ENCODE measurements at regions of chr15 and their contacts with region 1.

Region 1: DNA sequence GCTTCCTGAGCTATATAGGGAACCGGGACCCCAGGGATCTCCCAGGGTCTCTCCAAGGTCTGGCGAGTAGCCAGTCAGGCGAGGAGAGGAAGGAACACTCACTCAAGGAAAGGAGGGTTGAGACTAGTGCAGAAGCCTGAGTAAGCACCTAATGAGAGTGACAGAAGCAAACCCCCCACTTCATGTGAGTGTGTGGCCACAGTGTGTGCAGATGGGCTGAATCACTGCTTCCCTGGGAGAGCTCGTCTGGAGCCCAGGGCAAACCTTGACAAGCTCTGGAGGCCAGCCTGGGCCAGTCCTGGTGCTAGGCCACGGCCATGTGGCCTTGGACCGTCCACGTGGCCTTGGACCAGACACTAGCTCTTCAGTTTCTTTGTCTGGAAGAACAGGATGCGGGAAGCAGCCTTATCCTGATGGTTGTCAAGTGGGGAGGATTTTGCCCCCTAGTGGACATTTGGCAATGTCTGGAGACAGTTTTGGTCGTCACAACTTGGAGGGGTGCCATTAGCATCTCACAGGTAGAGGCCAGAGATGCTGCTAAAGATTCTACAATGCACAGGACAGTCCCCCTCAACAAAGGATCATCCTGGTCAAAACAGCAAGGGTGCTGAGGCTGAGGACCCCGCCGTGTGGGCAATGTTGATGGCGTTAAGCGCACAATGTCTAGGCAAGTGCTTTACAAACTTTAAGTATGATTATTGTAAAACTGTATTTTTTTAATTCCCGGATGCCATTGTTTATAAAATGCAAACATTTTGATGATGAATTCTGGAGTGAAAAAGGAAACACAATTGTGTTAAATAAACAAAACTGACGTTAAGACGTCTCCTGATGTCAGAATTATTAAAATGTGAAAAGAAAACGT is 34.8 kb upstream of the CTSH start:
- DNase-seq: no peak
- H3K4me3 ChIP-seq: no peak overlapping the region
- H3K27ac ChIP-seq: no peak overlapping the region
- H3K4me1 ChIP-seq: peaks cover 5 to 18% (median 10%) of the 10 kb centered on the region in 4 donors
- H3K27me3 ChIP-seq: no peaks in the 10 kb centered on the region
- CTCF ChIP-seq: peak; percentile 52 to 64 (median 61)
- EP300 ChIP-seq: no peak
- POLR2A ChIP-seq: no peak

Region 2: DNA sequence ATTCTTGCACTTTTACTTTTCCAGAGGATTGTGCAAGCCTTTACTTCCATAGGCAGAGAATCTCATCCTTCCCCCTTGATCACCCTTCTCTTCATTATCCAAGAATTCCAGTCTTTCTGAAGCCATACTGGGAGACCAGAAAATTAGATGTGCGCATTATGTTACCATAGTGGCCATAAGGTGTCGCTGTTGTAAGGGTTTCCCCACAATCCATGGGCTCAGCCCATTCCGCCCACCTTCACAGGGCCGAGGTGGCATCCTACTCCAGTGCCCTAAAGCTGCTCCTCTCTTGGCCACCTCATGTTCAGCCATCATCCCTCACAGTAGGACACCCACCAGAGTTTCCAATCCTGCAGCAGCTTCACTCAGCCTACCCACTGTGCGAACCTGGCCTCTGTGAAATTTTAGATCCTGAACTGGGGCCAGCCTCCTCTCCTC is 69.9 kb before region 1 on chr15:
- intact Hi-C with region 1: loop called (anchors 5 kb)
- DNase-seq: no peak
- H3K4me3 ChIP-seq: no peak overlapping the region
- H3K27ac ChIP-seq: no peak overlapping the region
- H3K4me1 ChIP-seq: peaks cover 32 to 43% (median 41%) of the 10 kb centered on the region in 4 donors
- H3K27me3 ChIP-seq: no peaks in the 10 kb centered on the region
- CTCF ChIP-seq: peak; percentile 48 to 67 (median 56)
- EP300 ChIP-seq: no peak
- POLR2A ChIP-seq: no peak

Measured in esophagus muscularis mucosa (tissue), 4 donors.